Activated T-helper 1 cell treated with anti-CD3 and anti-CD28 coated beads, Interleukin-12 subunit alpha, Interleukin-12 subunit beta, Interleukin-2, Interleukin-4 antibody, amounts not matched to agents 30 ng/mL and 10 ng/mL and 1 ng/mL, durations not matched to agents 14 hours and 24 hours and 36 hours (primary cell): ENCODE measurements at regions of chr1 and their contacts with region 1.

Region 1: GRCh38 chr1:117695796-117696490 is 90.1 kb downstream of the TENT5C start:
- DNase-seq: no peak
- H3K4me3 Mint-ChIP-seq: no peak overlapping the region
- H3K27ac Mint-ChIP-seq: no peak overlapping the region
- H3K4me1 Mint-ChIP-seq: peaks cover 7% of the 10 kb centered on the region
- H3K27me3 Mint-ChIP-seq: peaks cover 27% of the 10 kb centered on the region

Region 2: DNA sequence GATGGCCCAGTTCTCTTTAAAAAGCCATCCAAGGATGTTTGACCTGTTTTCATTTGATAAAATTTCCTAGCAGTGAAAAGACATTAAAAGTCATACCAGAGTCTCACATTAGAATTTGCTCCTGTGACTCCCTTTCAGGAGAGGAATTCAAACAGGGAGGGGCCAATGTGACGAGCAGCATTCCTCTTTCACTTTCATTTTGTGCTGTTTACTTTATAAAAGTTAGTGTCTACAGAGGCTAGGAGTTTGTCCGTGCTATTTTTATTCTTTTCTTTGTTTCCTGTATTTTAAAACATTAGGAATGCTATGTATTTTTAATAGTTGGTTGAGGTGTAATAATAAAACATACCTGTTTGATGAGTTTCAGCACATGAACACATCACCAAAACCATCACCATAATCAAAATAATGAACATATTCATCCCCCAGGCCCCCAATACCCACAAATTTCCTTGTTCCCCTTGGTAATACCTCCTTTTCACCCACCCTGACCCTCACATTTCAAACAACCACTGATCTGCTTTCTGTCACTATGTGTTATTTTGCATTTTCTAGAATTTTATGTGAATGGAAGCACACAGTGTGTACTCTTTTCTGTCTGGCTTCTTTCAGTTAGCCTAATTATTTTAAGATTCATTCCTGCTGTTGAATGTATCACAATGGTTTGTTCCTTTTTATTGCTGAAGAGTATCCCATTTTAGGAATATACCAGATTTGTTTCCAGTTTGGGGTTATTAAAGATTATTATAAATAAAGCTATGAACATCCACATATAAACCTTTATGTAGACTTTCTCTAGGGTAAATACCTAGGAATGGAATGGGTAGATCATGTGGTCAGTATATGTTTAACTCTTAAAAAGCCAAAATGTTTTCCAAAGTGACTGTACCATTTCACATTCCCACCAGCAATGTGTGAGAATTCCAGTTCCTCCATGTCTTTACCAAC is 39.4 kb after region 1 on chr1:
- intact Hi-C with region 1: loop called (anchors 5 kb)
- DNase-seq: peak; percentile 35
- H3K4me3 Mint-ChIP-seq: peak overlapping the region; percentile 65
- H3K27ac Mint-ChIP-seq: peak overlapping the region; percentile 60
- H3K4me1 Mint-ChIP-seq: peaks cover 14% of the 10 kb centered on the region
- H3K27me3 Mint-ChIP-seq: peaks cover 12% of the 10 kb centered on the region